Psoas muscle (tissue), 8 donors: ENCODE measurements at regions of chr15 and their contacts with region 1.

Region 1: GRCh38 chr15:44711356-44712107 is at the start of gene B2M:
- DNase-seq: peak; percentile 94 to 98
- ATAC-seq: peak; percentile 97 to 98 (median 98)
- H3K4me3 ChIP-seq: peak within 1 kb of the TSS; percentile 82
- H3K27ac ChIP-seq: peak within 1 kb of the TSS; percentile 95
- H3K4me1 ChIP-seq: peaks cover 4% of the 10 kb centered on the region
- H3K27me3 ChIP-seq: no peaks in the 10 kb centered on the region
- CTCF ChIP-seq: no peak
- total RNA-seq, gene B2M: 400 to 577 (median 512) TPM

Region 2: GRCh38 chr15:44728576-44729407 is 17.3 kb after region 1 on chr15:
- intact Hi-C with region 1: loop called in 1 of 2 experiments (anchors 1 kb)
- DNase-seq: peak; percentile 93 to 95
- ATAC-seq: peak; percentile 96 to 97 (median 97)
- H3K4me3 ChIP-seq: peak overlapping the region; percentile 89
- H3K27ac ChIP-seq: peak overlapping the region; percentile 93
- H3K4me1 ChIP-seq: peaks cover 15% of the 10 kb centered on the region
- H3K27me3 ChIP-seq: no peaks in the 10 kb centered on the region
- CTCF ChIP-seq: no peak

Region 3: DNA sequence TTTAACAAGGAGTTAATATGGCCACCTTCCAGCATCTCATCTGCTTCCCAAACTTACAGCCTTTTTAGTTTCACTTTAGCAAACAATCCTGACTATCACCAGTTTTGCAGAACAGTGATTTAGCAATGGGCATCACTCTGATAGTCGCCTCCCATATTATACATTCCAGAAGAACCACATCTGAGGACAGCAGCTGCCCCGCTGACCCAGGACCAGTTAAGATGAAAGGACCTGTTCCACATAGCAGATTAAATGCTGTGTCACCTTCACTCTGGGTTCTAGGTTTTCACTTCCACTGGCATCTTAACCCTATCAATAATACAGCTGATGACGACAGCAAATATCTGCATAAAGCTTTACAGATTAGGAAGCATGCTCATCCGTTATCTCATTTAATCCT is 124.6 kb after region 1 on chr15:
- intact Hi-C with region 1: no loop called
- DNase-seq: no peak
- ATAC-seq: no peak
- H3K4me3 ChIP-seq: no peak overlapping the region
- H3K27ac ChIP-seq: no peak overlapping the region
- H3K4me1 ChIP-seq: no peaks in the 10 kb centered on the region
- H3K27me3 ChIP-seq: no peaks in the 10 kb centered on the region
- CTCF ChIP-seq: no peak